ENCODE measurements at regions of chr4 and their contacts with region 1.

Region 1: GRCh38 chr4:140756319-140757231 is at the start of gene TBC1D9:
- DNase-seq: peak; percentile 86
- ATAC-seq: peak; percentile 75
- H3K4me3 ChIP-seq: peak within 1 kb of the TSS; percentile 66 to 83
- H3K27ac ChIP-seq: peak within 1 kb of the TSS; percentile 82
- H3K4me1 ChIP-seq: peaks cover 6 to 22% of the 10 kb centered on the region in 2 experiments; a peak in 3 of 4 replicates
- H3K27me3 ChIP-seq: no peaks in the 10 kb centered on the region
- CTCF ChIP-seq: peak in 1 of 3 experiments; percentile 4; a peak in 1 of 6 replicates
- POLR2A ChIP-seq: peak; percentile 53
- RAD21 ChIP-seq: no peak
- total RNA-seq, gene TBC1D9: 9.5 TPM

Region 2: GRCh38 chr4:140729344-140730030 is 27.1 kb before region 1 on chr4:
- CTCF ChIA-PET with region 1: no interaction called
- POLR2A ChIA-PET with region 1: no interaction called
- RAD21 ChIA-PET with region 1: no interaction called
- intact Hi-C with region 1: loop called (anchors 2 kb)
- DNase-seq: no peak
- ATAC-seq: no peak
- H3K4me3 ChIP-seq: no peak overlapping the region
- H3K27ac ChIP-seq: no peak overlapping the region
- H3K4me1 ChIP-seq: peaks cover 28 to 43% of the 10 kb centered on the region in 2 experiments
- H3K27me3 ChIP-seq: no peaks in the 10 kb centered on the region
- CTCF ChIP-seq: no peak
- POLR2A ChIP-seq: no peak
- RAD21 ChIP-seq: no peak

Region 3: GRCh38 chr4:140743194-140743931 is 13.2 kb before region 1 on chr4:
- CTCF ChIA-PET with region 1: interaction called, 11 read pairs
- POLR2A ChIA-PET with region 1: interaction called, 7 read pairs
- RAD21 ChIA-PET with region 1: no interaction called
- intact Hi-C with region 1: no loop called
- DNase-seq: no peak
- ATAC-seq: peak; percentile 64
- H3K4me3 ChIP-seq: no peak overlapping the region
- H3K27ac ChIP-seq: no peak overlapping the region
- H3K4me1 ChIP-seq: peaks cover 4 to 9% of the 10 kb centered on the region in 2 experiments; a peak in 3 of 4 replicates
- H3K27me3 ChIP-seq: no peaks in the 10 kb centered on the region
- CTCF ChIP-seq: peak; percentile 11 to 36 (median 35); a peak in 5 of 6 replicates
- POLR2A ChIP-seq: no peak
- RAD21 ChIP-seq: peak; percentile 30; the same call in 1 of the 2 replicates